Activated naive CD8-positive, alpha-beta T cell treated with anti-CD3 and anti-CD28 coated beads, Interleukin-2, amount 10 ng/mL, durations not matched to agents 7 days and 5 days (primary cell): ENCODE measurements at regions of chr20 and their contacts with region 1.

Region 1: GRCh38 chr20:21099751-21100577 is 6.2 kb downstream of the LINC00237 start:
- DNase-seq: peak; percentile 71
- ATAC-seq: peak; percentile 60
- H3K4me3 Mint-ChIP-seq: peak overlapping the region; percentile 83
- H3K27ac Mint-ChIP-seq: peak overlapping the region; percentile 90
- H3K4me1 Mint-ChIP-seq: peaks cover 38% of the 10 kb centered on the region
- H3K27me3 Mint-ChIP-seq: peaks cover 70% of the 10 kb centered on the region

Region 2: DNA sequence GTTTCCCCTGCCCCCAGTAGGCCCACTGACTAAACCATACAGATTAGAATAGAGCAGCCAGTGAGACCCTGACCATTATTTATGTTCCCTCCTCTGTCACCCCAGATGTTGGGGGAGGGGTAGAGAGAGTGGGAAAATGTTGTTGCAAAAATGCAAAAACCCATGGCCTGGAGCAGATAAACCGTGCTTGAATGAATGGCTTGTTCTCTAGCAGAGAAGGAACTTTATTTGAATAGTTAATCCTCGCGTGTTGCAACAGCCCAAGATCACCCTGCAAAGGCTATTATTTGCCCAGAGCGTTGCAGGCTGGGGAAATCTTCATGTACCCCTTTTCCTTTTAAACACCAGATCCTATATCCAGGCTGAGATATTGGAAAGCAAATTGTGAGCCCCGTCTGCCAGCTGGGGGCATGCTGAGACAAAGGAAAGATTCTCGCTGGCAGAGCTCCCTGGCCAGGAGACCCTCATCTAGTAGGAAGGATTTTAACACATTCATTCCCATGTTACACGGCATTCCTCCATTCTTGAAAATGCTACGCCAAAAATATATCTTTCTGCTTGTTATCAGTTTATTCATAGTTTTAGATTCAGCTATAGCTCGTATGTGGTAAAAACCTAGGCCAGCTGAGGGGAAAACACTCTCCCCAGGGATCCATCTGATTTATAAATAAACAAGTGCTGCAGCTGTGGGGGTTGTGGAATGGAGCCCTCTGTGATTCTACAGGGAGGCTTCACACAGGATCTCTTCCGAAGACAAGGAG is 46.8 kb before region 1 on chr20:
- POLR2A ChIA-PET with region 1: no interaction called
- DNase-seq: no peak
- ATAC-seq: no peak
- H3K4me3 Mint-ChIP-seq: no peak overlapping the region
- H3K27ac Mint-ChIP-seq: no peak overlapping the region
- H3K4me1 Mint-ChIP-seq: no peaks in the 10 kb centered on the region
- H3K27me3 Mint-ChIP-seq: peaks cover 38% of the 10 kb centered on the region

Region 3: GRCh38 chr20:21125849-21126580 is 26.1 kb after region 1 on chr20 and contains the start of gene KIZ:
- POLR2A ChIA-PET with region 1: interaction called, 19 read pairs
- DNase-seq: peak; percentile 100
- ATAC-seq: peak; percentile 98
- H3K4me3 Mint-ChIP-seq: peak within 1 kb of the TSS; percentile 91
- H3K27ac Mint-ChIP-seq: peak within 1 kb of the TSS; percentile 88
- H3K4me1 Mint-ChIP-seq: peaks cover 20% of the 10 kb centered on the region
- H3K27me3 Mint-ChIP-seq: no peaks in the 10 kb centered on the region
- total RNA-seq, gene KIZ: 33.4 to 36.6 TPM